ENCODE measurements at regions of chr17 and their contacts with region 1.

Region 1: GRCh38 chr17:60435244-60436167 is 13.2 kb downstream of the CHCT1 start:
- DNase-seq: peak; percentile 28
- H3K4me3 Mint-ChIP-seq: no peak overlapping the region
- H3K27ac Mint-ChIP-seq: no peak overlapping the region
- H3K4me1 Mint-ChIP-seq: peaks cover 3% of the 10 kb centered on the region
- H3K27me3 Mint-ChIP-seq: peaks cover 9% of the 10 kb centered on the region

Region 2: GRCh38 chr17:60142872-60143499 is 292.5 kb before region 1 on chr17:
- intact Hi-C with region 1: loop called (anchors 1 kb)
- DNase-seq: peak; percentile 70
- H3K4me3 Mint-ChIP-seq: no peak overlapping the region
- H3K27ac Mint-ChIP-seq: no peak overlapping the region
- H3K4me1 Mint-ChIP-seq: peaks cover 18% of the 10 kb centered on the region
- H3K27me3 Mint-ChIP-seq: peaks cover 84% of the 10 kb centered on the region

Region 3: DNA sequence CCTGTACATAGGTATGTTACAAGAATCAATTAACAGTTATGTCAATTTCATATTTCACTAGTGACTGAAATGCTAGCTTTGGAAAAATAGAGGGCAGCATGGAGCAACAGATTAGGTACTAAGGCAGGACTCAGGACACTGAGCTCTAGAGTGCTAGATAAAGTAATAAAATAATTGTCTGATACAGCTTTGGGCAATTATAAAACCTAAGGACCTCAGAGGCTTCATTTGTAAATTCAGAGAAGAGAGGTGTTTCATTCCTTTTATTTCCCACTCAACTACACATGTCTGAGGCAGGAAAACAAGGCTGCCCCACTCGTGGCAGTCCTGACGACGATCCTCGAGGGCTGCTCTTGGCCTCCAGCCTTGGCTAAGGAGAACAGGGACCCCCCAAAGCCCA is 204.3 kb before region 1 on chr17:
- intact Hi-C with region 1: loop called (anchors 10 kb)
- DNase-seq: no peak
- H3K4me3 Mint-ChIP-seq: no peak overlapping the region
- H3K27ac Mint-ChIP-seq: no peak overlapping the region
- H3K4me1 Mint-ChIP-seq: peaks cover 1% of the 10 kb centered on the region
- H3K27me3 Mint-ChIP-seq: no peaks in the 10 kb centered on the region